ENCODE measurements at regions of chr3 and their contacts with region 1.

Region 1: GRCh38 chr3:150183678-150184425 is 213.2 kb upstream of the PFN2 start:
- DNase-seq: peak; percentile 79
- ATAC-seq: peak; percentile 93 to 98

Region 2: DNA sequence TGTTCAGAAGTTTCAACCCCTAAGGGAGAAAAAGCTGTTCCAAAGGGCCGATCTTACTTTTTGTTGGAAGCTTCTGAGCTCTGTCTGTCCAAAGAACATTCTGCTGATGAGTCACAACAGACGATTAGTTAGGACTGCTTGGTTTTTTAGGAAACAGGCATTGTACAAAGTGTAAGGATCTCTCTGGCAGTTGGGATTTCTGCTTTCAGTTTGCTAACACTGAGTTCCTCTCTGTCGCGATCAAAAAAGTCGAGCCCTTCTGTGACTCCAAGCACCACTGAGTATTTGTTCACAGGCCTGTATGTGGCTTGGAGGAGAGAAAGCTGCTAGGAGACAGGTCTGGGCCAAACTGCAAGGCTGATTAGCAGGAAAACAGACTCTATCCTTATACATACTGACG is 121.4 kb before region 1 on chr3:
- intact Hi-C with region 1: loop called in 1 of 2 experiments (anchors 5 kb)
- DNase-seq: no peak
- ATAC-seq: peak; percentile 65 to 87

Region 3: GRCh38 chr3:150238998-150239619 is 55.3 kb after region 1 on chr3:
- intact Hi-C with region 1: no loop called
- DNase-seq: no peak
- ATAC-seq: no peak

Region 4: DNA sequence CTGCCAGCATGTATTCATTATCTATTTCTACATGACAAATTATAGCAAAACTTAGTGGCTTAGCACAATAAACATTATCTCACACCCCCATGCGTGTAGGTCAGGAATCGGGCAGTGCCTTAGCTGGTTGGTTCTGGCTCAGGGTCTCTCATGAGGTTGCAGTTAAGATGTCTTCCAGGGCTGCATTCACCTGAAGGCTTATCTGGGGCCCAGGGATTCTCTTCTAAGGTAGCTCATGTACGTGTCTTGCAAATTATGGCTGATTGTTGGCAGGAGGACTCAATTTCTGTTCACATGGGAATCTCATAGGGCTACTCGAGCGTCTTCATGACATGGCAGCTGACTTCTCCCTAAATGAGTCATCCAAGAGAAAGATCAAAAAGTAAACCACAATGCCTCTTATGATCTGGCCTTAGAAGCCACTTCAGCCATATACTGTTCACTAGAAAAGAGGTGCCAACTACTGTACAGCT is 181.3 kb after region 1 on chr3:
- intact Hi-C with region 1: no loop called
- DNase-seq: no peak
- ATAC-seq: no peak